ENCODE measurements at regions of chr3 and their contacts with region 1.

Region 1: DNA sequence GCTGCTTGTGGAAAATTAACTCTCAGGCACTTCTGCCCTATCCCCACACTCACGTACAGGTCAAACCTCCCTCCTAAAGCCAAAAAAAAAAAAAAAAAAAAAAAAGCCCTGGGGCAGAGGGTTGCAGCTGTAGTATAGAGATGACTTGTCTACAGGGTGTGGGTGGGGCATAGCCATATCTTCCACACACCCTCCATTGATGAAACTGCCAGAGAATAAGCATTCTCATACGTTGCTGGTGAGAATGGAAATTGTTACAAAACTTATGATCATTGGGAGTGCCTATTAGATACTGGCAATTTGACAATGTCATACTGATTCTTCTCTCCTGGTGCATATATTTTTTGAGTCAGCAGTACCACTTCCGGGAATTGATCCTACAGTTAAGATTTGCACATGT is 11.0 kb upstream of the CTNNB1 start:
- DNase-seq: peak; percentile 64
- ATAC-seq: peak; percentile 97
- H3K4me3 Mint-ChIP-seq: no peak overlapping the region
- H3K27ac Mint-ChIP-seq: peak overlapping the region; percentile 34
- H3K4me1 Mint-ChIP-seq: peaks cover 27% of the 10 kb centered on the region
- H3K27me3 Mint-ChIP-seq: peaks cover 6% of the 10 kb centered on the region

Region 2: DNA sequence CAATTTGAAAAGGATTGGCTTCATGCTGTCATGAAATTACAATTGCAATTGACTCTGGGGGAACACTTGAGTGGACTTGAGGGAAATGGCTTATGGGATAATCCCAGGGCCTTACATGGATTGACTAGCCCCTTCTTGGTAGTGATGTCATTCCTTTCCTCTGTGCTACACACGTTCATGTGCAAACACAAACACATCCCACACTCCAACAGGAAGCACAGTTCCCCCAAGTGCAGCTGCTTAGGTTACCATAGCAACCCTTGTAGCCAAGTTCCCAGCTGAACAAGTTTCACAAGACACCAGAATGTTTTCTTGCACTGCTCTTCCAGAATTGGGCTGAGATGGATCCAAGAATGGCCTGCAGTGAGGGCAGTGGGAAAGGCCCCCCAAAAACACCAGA is 446.5 kb before region 1 on chr3:
- CTCF ChIA-PET with region 1: no interaction called
- POLR2A ChIA-PET with region 1: no interaction called
- intact Hi-C with region 1: no loop called
- DNase-seq: no peak
- ATAC-seq: no peak
- H3K4me3 Mint-ChIP-seq: no peak overlapping the region
- H3K27ac Mint-ChIP-seq: no peak overlapping the region
- H3K4me1 Mint-ChIP-seq: no peaks in the 10 kb centered on the region
- H3K27me3 Mint-ChIP-seq: peaks cover under 1% of the 10 kb centered on the region

Region 3: DNA sequence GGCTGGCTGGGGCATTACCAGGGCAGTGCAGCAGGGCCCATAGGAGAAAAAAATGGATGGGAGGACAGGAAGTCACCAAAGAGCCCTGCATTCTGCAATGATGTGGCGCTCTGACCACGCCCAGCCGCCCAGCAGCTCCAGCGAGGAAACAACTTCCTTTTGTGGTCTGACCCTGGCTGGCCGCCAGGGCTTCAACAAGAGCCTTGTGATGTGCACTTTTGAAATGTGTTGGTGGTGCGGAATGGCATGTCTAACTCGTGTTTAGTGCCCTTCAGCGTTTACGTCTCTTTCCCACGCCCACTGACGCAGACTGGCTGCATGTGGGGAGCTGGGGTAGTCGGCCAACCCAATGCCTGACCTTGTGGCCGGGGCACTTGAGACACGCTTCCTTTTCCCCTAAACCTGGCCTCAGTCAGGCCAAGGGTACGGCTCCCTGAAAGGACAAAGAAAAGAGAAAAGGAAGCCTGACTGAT is 70.8 kb before region 1 on chr3:
- CTCF ChIA-PET with region 1: no interaction called
- POLR2A ChIA-PET with region 1: no interaction called
- intact Hi-C with region 1: loop called in 1 of 2 experiments (anchors 1 kb)
- DNase-seq: peak; percentile 94
- ATAC-seq: peak; percentile 96
- H3K4me3 Mint-ChIP-seq: peak overlapping the region; percentile 2
- H3K27ac Mint-ChIP-seq: peak overlapping the region; percentile 86
- H3K4me1 Mint-ChIP-seq: peaks cover 28% of the 10 kb centered on the region
- H3K27me3 Mint-ChIP-seq: no peaks in the 10 kb centered on the region

Region 4: DNA sequence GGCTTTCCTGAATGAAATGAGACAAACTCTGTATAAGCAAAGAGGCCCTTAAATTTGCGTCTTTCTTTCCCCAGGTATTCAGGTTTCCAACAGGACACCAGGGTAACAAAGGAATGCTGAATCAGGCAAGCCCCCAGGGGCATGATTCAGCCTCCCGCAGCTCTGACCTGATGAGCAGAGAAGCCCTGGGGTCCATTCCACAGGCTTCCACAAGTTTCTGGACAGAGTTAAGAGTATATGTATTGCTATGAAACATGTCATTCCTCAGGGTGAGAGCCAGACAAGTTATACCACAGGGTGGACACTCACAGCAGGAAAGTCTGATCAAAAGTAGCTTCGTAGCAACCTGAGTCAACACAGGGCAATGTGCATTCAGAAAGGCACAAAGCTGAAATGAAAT is 57.0 kb before region 1 on chr3:
- CTCF ChIA-PET with region 1: no interaction called
- POLR2A ChIA-PET with region 1: no interaction called
- intact Hi-C with region 1: no loop called
- DNase-seq: no peak
- ATAC-seq: no peak
- H3K4me3 Mint-ChIP-seq: no peak overlapping the region
- H3K27ac Mint-ChIP-seq: no peak overlapping the region
- H3K4me1 Mint-ChIP-seq: no peaks in the 10 kb centered on the region
- H3K27me3 Mint-ChIP-seq: no peaks in the 10 kb centered on the region

Region 5: GRCh38 chr3:41158947-41159346 is 29.3 kb before region 1 on chr3:
- CTCF ChIA-PET with region 1: interaction called, 3 read pairs
- POLR2A ChIA-PET with region 1: interaction called, 4 read pairs
- intact Hi-C with region 1: loop called in 1 of 2 experiments (anchors 2 kb)
- DNase-seq: peak; percentile 30
- ATAC-seq: peak; percentile 58
- H3K4me3 Mint-ChIP-seq: no peak overlapping the region
- H3K27ac Mint-ChIP-seq: peak overlapping the region; percentile 0
- H3K4me1 Mint-ChIP-seq: peaks cover 19% of the 10 kb centered on the region
- H3K27me3 Mint-ChIP-seq: no peaks in the 10 kb centered on the region

Region 6: DNA sequence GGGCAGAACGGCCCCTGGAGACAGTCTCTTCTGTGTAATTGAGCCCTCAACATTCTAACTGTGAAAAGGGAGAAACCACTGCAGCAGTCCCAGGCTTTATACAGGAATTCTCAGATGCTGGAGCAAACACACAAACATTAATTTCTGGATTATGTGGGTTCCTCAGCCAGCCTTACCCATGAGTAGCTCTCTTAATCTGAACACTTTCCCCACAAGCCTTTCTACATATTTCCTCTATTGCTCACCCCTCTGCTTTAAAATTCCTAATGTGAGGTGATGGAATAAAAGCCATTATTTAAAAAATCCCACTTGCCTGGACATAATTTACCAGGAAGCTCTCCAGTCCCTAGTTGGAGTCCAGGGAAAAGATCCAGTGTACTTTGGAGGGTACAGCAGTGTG is 150.0 kb after region 1 on chr3:
- CTCF ChIA-PET with region 1: no interaction called
- POLR2A ChIA-PET with region 1: no interaction called
- intact Hi-C with region 1: no loop called
- DNase-seq: no peak
- ATAC-seq: no peak
- H3K4me3 Mint-ChIP-seq: no peak overlapping the region
- H3K27ac Mint-ChIP-seq: no peak overlapping the region
- H3K4me1 Mint-ChIP-seq: no peaks in the 10 kb centered on the region
- H3K27me3 Mint-ChIP-seq: no peaks in the 10 kb centered on the region

Region 7: GRCh38 chr3:41836360-41837134 is 648.3 kb after region 1 on chr3:
- CTCF ChIA-PET with region 1: no interaction called
- POLR2A ChIA-PET with region 1: no interaction called
- intact Hi-C with region 1: loop called in 1 of 2 experiments (anchors 5 kb)
- DNase-seq: peak; percentile 32
- ATAC-seq: peak; percentile 90
- H3K4me3 Mint-ChIP-seq: no peak overlapping the region
- H3K27ac Mint-ChIP-seq: peak overlapping the region; percentile 13
- H3K4me1 Mint-ChIP-seq: peaks cover 20% of the 10 kb centered on the region
- H3K27me3 Mint-ChIP-seq: no peaks in the 10 kb centered on the region